GM10248 (cell line): ENCODE measurements at regions of chr5 and their contacts with region 1.

Region 1: DNA sequence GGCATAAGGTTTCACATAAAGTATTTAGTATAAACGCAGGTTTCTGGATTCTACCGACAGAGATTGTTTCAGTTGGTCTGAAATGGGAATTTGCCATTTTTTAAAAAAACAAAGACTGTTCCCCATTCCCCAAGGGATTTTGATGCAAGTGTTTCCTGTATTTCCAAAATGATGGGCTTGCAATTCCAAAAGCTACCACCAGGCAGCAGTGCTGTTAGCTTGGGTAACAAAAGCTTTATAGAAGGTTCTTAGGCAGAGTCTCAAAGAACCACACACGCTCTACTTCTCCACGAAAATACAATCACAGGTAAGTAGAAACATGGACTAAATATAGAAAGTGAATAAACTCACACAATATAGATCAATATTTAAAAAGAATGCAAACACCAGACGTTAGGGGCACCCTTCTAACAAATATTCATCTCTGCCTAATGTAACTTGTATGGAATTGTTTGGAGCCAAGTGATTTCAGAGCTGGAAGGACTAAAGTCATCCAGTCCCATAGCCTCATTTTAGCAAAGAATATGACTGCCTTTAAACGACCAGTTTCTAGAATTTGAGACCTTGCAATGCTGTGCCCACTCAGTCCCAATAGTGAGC is 154.3 kb downstream of the SPOCK1 start:
- DNase-seq: peak; percentile 26
- CTCF ChIP-seq: peak; percentile 42

Region 2: DNA sequence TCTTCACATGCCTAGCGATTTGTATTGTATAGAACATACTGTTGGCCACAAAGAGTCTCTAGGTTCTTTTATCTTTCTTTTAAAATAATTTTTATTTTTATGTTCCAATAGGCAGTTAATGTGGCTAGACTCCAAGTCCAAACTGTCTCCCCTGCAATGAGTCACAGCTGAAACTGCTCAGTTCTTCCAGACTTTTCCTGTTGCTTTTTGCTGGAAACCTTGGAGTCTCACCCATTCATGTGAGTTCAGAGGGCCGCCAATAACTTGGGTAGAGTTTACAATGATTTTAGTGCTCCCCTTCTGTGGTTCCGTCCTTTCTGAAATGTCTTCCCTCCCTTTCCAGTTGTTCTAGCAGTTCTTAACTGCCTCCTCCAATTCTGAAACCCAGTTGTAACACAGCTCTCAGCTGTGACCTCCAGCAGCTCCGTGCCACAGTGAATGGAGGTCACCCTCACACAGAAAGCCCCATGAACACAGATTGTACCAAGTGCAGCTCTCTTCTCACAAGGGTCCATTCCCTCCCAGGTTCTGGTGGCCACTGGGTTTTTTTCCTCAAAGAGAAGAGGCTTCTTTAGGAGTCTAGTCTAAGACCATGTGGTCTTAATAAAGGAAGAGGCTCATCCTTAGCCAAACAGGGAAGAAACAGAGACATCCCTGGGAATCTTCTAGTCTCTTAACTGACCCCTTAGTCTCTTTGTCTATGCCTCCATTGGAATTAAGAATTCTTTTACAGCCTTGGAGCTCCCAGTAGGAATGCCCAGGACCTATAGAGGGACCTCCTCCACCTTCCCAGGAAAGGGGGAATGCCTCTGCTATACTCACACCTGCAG is 44.2 kb before region 1 on chr5:
- CTCF ChIA-PET with region 1: no interaction called
- POLR2A ChIA-PET with region 1: no interaction called
- DNase-seq: no peak
- CTCF ChIP-seq: no peak

Region 3: DNA sequence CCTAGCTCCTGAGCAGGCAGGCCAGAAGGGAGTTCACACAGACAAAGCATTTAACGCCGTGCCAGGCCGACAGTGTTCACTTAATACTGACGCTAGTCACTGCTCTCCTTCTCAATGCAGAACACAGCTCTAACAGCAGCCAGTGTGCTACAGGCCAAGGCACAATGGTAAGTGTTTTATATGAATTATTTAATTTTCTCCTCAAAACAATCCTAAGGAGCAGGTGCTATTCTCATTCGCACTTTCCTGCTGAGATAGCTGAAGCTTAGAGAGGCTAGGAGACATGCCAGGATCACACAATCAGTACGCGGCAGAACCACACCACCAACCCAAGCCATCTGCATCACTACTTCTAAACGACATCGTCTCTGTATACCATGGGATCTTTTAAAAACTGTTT is 16.4 kb before region 1 on chr5:
- CTCF ChIA-PET with region 1: interaction called, 13 read pairs
- POLR2A ChIA-PET with region 1: no interaction called
- DNase-seq: no peak
- CTCF ChIP-seq: no peak

Region 4: DNA sequence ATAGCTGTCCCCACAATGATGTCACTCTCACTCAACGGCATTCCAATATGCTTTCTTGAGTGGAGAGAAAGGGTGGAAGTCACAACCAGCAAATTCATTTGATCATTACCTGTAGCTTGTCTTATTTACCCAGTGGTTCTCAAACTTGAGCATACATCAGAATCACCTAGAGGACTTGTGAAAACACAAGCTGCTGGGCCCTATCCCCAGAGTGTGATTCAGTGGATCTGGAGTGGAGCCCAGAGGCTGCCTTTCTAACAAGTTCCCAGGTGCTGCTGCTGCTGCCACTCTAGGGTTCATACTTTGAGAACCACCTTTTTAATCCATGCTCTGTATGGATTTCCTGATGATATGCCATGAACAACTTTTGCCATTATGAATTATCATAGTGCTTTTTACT is 296.3 kb after region 1 on chr5:
- CTCF ChIA-PET with region 1: no interaction called
- POLR2A ChIA-PET with region 1: no interaction called
- DNase-seq: no peak
- CTCF ChIP-seq: no peak